ENCODE measurements at regions of chr15 and their contacts with region 1.

Region 1: GRCh38 chr15:85485956-85486567 is 105.7 kb downstream of the AKAP13 start:
- DNase-seq: peak; percentile 76
- H3K4me3 Mint-ChIP-seq: no peak overlapping the region
- H3K27ac Mint-ChIP-seq: no peak overlapping the region
- H3K4me1 Mint-ChIP-seq: peaks cover 61% of the 10 kb centered on the region
- H3K27me3 Mint-ChIP-seq: no peaks in the 10 kb centered on the region

Region 2: GRCh38 chr15:85296615-85297402 is 189.3 kb before region 1 on chr15:
- CTCF ChIA-PET with region 1: interaction called, 7 read pairs
- intact Hi-C with region 1: loop called (anchors 1 kb)
- DNase-seq: peak; percentile 85
- H3K4me3 Mint-ChIP-seq: peak overlapping the region; percentile 51
- H3K27ac Mint-ChIP-seq: no peak overlapping the region
- H3K4me1 Mint-ChIP-seq: peaks cover 10% of the 10 kb centered on the region
- H3K27me3 Mint-ChIP-seq: no peaks in the 10 kb centered on the region

Region 3: DNA sequence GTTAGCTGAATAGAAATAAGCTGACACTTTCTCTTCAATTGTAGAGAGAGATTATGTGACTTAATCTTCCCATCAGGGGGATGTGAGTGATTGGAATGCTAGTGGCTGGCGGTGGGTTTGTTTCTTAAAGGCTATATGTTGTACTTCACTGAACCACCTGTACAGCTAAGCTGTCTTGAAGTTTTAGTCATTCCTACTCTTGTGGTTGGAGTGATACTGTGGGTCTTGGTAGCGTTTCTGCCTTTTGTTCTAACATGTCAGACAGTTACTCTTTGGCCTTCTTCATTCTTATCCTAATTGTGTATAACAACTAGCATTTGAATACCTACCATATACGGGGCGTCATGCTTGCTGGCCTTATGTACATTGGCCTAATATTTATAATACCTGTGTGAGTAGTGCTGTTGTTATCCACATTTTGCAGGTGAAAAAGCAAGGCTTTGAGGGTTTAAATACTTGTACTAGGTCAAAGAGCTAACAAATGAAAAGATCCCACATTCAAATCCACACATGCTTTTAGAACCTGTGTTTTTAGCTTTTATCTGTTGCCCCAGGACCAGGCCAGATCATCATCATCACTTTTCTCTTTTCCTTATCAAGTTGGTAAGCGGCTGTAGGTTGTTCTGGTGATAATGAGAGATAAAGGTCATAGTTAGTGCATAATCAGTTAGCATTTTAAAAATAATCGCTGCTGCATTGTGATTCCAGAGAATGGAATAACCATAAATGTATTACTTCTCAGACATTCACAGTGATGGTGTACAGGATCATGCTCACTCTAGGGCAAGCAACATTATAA is 55.5 kb before region 1 on chr15:
- CTCF ChIA-PET with region 1: no interaction called
- intact Hi-C with region 1: no loop called
- DNase-seq: peak; percentile 65
- H3K4me3 Mint-ChIP-seq: no peak overlapping the region
- H3K27ac Mint-ChIP-seq: no peak overlapping the region
- H3K4me1 Mint-ChIP-seq: peaks cover 54% of the 10 kb centered on the region
- H3K27me3 Mint-ChIP-seq: no peaks in the 10 kb centered on the region

Region 4: DNA sequence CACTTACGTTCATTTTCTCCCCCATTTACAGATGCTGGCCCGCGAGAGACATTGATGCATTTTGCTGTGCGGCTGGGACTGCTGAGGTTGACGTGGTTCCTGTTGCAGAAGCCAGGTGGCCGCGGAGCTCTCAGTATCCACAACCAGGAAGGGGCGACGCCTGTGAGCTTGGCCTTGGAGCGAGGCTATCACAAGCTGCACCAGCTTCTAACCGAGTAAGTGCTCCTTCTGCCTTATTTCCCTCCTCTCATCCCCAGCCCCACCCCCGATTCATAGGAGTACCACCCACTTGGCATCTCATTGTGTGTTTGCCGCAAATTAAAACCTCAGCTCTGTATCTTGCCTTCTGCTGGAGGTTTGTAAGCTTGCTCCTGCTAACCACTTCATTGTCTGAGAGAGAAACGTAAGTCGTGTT is 57.7 kb after region 1 on chr15:
- CTCF ChIA-PET with region 1: no interaction called
- intact Hi-C with region 1: loop called (anchors 1 kb)
- DNase-seq: peak; percentile 62
- H3K4me3 Mint-ChIP-seq: peak overlapping the region; percentile 52
- H3K27ac Mint-ChIP-seq: peak overlapping the region; percentile 62
- H3K4me1 Mint-ChIP-seq: peaks cover 74% of the 10 kb centered on the region
- H3K27me3 Mint-ChIP-seq: no peaks in the 10 kb centered on the region

Region 5: GRCh38 chr15:85554852-85555521 is 68.9 kb after region 1 on chr15:
- CTCF ChIA-PET with region 1: no interaction called
- intact Hi-C with region 1: no loop called
- DNase-seq: no peak
- H3K4me3 Mint-ChIP-seq: no peak overlapping the region
- H3K27ac Mint-ChIP-seq: no peak overlapping the region
- H3K4me1 Mint-ChIP-seq: peaks cover 52% of the 10 kb centered on the region
- H3K27me3 Mint-ChIP-seq: no peaks in the 10 kb centered on the region

Region 6: DNA sequence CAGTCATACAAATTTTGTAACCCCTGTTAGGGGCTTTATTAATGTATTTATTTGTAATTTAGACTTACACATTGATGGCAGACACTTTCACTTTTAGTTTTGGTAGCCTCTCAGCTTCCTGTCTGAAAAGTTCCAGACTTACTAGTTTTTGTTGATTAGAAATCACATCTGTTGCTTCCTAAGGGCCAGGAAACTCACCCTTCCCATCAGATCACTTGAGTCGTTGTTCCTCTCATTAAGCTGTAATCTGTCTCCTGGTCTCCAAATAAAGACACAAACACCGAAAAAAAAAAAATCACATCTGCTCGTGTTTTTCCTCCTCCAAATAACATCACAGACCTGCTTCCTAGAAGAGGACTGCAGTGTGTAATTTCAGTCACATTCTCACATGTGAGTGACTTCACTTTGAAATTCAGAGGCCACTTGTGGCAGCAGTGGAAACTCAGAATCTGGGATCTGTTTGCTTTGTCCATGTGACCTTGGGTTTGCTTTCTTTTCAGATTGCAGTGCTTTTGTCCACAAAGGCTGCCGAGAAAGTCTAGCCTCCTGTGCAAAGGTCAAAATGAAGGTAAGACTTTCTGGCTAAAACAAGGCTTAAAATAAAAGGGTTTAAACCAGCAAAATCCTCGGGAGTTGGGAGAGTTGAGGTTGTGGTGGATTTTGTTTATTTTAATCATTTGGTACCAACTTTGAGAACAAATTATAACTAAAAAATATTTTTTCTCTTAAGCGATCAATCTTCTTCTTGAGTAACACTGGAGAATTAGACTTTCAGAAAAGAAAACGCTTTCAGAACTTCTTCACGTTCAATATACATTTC is 221.7 kb after region 1 on chr15:
- CTCF ChIA-PET with region 1: no interaction called
- intact Hi-C with region 1: loop called (anchors 5 kb)
- DNase-seq: peak; percentile 51
- H3K4me3 Mint-ChIP-seq: peak overlapping the region; percentile 79
- H3K27ac Mint-ChIP-seq: peak overlapping the region; percentile 99
- H3K4me1 Mint-ChIP-seq: peaks cover 87% of the 10 kb centered on the region
- H3K27me3 Mint-ChIP-seq: no peaks in the 10 kb centered on the region

Region 7: DNA sequence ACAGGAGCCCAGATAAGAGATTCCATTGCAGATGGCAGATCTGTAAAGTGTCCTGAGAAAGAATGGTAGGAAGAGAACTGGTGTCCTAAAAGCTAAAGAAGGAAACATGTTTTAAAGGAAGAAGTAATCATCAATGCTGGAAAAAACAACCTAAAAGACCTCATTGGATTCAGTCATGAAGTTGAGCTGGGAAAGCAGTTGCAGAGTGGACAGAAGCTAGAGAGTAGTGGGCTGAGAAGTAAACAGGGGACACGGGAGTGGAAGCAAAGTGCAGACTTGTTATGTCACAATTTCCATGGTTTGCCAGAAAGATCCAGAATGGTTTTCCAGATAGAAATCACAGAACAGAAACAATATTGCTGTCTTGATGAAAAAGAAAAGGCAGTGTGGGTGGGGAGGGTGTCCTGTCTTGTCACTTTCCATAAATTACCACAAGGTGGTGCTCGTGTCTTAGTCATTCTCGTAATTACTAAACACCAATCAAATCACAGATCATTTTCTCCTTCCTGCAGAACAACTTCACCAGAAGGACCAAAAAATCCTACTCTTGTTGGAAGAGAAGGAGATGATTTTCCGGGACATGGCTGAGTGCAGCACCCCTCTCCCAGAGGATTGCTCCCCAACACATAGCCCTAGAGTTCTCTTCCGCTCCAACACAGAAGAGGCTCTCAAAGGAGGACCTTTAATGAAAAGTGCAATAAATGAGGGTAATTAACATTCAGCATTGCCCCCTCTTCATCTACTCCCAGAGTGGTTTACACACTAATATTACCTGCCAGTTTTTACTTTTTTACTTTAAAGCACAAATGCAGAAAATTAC is 244.1 kb after region 1 on chr15:
- CTCF ChIA-PET with region 1: no interaction called
- intact Hi-C with region 1: loop called (anchors 1 kb)
- DNase-seq: peak; percentile 59
- H3K4me3 Mint-ChIP-seq: no peak overlapping the region
- H3K27ac Mint-ChIP-seq: peak overlapping the region; percentile 90
- H3K4me1 Mint-ChIP-seq: peaks cover 24% of the 10 kb centered on the region
- H3K27me3 Mint-ChIP-seq: no peaks in the 10 kb centered on the region

Measured in activated naive CD4-positive, alpha-beta T cell treated with anti-CD3 and anti-CD28 coated beads for 36 hours (primary cell).